Body of pancreas (tissue), 4 donors: ENCODE measurements at regions of chr1 and their contacts with region 1.

Region 1: GRCh38 chr1:53182111-53182593 is 14.5 kb upstream of the CPT2 start:
- DNase-seq: peak; percentile 82 to 89 (median 85)
- ATAC-seq: peak; percentile 68
- H3K4me3 ChIP-seq: no peak overlapping the region
- H3K27ac ChIP-seq: peak overlapping the region in 3 of 4 donors; percentile 20 to 50 (median 26)
- H3K4me1 ChIP-seq: peaks cover 18% of the 10 kb centered on the region
- H3K27me3 ChIP-seq: no peaks in the 10 kb centered on the region
- CTCF ChIP-seq: peak; percentile 63 to 96 (median 85)
- POLR2A ChIP-seq: no peak

Region 2: GRCh38 chr1:53014791-53015507 is 167.2 kb before region 1 on chr1:
- intact Hi-C with region 1: loop called (anchors 10 kb)
- DNase-seq: peak; percentile 78 to 90 (median 88)
- ATAC-seq: peak; percentile 98
- H3K4me3 ChIP-seq: peak overlapping the region in 1 of 2 donors; percentile 42
- H3K27ac ChIP-seq: peak overlapping the region in 3 of 4 donors; percentile 20 to 66 (median 25)
- H3K4me1 ChIP-seq: peaks cover 17% of the 10 kb centered on the region
- H3K27me3 ChIP-seq: no peaks in the 10 kb centered on the region
- CTCF ChIP-seq: peak in 2 of 7 experiments; percentile 14 to 23
- POLR2A ChIP-seq: peak in 2 of 3 donors; percentile 42 to 44